Activated naive CD4-positive, alpha-beta T cell treated with anti-CD3 and anti-CD28 coated beads, Interleukin-2, amount 10 ng/mL, durations not matched to agents 7 days and 5 days (primary cell): ENCODE measurements at regions of chr6 and their contacts with region 1.

Region 1: DNA sequence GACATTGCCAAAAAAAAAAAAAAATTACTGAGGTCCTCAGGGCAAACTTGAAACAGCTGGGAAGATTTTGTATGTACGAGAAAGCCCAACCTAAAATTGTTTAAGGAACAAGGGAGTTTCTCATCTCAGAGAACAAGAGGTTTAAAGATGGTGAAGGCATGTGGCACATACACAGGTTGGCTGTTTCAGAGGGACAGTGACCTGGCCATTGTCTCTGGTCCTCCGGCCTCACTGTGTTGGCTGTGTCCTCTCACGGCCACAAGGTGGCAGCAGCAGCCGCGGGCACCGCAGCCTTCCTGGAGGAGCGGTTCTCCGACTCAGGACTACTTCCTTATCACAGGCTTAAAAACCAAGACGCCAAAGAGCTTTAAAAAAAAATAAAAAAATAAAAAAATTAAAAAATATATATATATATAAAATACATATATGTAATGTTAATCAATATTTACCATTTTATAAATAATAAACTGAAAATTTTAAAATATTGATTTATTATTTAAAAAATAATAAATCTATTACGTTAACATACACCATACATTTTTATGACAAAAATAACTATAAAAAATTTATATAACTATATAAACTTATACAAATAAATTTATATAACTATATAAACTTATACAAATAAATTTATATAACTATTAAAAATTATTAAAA is 52.8 kb downstream of the GTF2H5 start:
- DNase-seq: peak; percentile 81
- H3K4me3 Mint-ChIP-seq: no peak overlapping the region
- H3K27ac Mint-ChIP-seq: no peak overlapping the region
- H3K4me1 Mint-ChIP-seq: peaks cover 4% of the 10 kb centered on the region
- H3K27me3 Mint-ChIP-seq: peaks cover 35% of the 10 kb centered on the region

Region 2: DNA sequence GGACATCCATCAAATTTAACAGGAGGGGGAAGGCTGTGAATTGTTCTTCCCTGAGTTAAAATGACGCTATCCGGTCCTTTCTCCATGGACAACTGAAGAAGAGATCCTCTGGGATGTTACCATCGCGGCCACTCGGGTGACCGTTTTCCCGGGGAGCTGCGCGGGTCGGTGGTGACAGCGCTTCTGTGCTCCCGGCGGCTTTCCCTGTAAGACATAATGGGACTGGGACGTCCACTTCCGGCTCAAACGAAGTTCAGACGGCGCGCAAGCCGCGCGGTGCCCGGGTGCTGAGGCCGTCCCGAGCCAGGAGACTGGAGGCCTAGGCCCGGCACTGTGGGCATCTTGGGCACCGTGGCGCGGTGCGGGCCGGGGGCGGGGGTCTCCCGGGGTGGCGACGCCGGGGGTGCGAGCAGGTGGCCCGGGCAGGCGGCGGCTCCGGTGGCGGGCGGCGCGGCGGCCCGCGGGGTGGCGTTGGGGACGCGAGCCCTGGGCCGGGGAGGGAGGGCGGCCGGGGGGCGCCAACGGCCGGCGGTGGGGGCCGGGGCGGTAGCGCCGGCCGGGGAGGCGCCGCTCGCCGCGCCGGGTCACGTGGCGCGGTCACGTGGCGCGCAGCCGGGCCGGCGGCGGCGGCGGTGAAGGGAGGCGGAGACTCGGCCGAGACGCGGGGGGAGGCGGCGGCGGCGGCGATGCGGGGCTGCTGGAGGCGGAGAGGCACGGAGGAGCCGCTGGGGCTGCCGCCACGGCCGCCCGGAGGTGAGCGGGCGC is 10.8 kb after region 1 on chr6:
- CTCF ChIA-PET with region 1: interaction called, 10 read pairs
- DNase-seq: peak; percentile 82
- H3K4me3 Mint-ChIP-seq: peak overlapping the region; percentile 90
- H3K27ac Mint-ChIP-seq: peak overlapping the region; percentile 86
- H3K4me1 Mint-ChIP-seq: peaks cover 25% of the 10 kb centered on the region
- H3K27me3 Mint-ChIP-seq: peaks cover 13% of the 10 kb centered on the region

Region 3: DNA sequence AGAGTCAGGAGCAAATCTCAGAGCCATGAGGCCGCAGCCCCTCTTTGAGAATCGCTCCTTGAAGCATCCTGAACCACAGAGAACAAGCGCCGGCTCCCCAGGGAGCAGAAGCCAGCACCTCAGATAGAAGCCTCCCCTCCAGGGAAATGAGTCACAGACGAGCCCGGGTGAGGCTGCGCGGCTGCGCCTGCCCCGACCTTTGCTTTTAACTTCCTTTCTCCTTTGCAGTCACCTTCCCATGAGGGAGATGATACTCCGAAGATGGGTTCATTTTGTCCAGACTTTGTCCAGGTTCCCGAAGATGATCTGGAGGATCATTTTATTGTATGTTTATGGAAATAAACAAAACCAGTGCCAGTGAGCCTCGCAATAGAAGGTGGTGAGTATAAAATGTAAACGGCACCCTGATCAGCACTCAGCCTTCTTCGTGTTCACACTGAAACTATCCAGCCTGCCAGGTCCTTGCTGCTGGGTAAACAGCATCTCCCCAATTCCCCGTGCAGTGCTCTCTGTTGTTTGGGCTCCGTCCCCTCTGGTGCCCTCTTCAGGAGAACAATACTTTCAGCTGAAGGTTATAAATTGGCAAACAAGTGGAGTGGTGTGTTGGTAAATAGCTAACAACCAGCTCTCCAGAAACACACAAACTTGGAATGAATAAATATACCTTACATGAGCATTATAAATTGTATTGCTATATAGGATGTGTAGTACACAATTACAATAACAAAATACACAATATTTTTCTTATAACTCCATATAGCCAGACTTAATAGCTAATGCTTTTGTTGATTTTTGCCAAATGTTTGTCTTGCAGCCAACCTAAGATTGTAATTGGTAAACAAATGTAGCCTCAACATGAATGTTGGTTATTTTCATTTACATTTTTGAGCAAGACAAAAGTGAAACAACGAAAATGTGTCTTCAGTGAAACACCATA is 297.5 kb after region 1 on chr6:
- CTCF ChIA-PET with region 1: interaction called, 10 read pairs
- DNase-seq: peak; percentile 82
- H3K4me3 Mint-ChIP-seq: peak overlapping the region; percentile 77
- H3K27ac Mint-ChIP-seq: peak overlapping the region; percentile 80
- H3K4me1 Mint-ChIP-seq: peaks cover 53% of the 10 kb centered on the region
- H3K27me3 Mint-ChIP-seq: peaks cover 66% of the 10 kb centered on the region

Region 4: DNA sequence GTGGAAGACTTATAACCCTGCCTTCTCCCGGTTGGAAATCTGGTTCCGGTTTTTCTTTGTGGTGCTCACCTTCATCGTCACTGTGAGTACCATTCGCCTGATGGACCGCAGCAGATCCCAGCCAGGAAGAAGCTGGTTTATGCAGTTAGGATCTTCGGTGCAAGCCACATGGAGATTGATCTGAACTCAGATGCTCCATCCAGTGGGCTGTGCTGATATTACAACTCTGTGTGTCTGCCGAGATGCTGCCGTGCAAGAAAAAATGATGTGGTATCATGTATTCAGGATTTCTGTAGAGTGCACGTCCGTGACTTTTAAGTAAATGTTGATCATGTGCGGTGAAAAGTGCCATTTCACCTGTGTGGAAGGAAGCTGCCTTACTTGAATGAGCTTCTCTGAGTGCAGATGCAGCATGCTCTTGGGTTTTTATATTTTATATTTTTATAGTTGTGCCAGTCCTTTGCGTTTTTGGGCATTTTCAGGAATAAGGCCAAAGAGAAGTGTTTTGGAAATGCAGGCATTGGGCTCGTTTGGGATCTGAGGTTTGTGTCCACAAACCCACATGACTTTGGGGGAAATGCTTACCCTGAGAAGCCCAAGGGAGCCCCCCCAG is 384.5 kb after region 1 on chr6:
- CTCF ChIA-PET with region 1: interaction called, 29 read pairs
- DNase-seq: peak; percentile 71
- H3K4me3 Mint-ChIP-seq: no peak overlapping the region
- H3K27ac Mint-ChIP-seq: no peak overlapping the region
- H3K4me1 Mint-ChIP-seq: peaks cover 4% of the 10 kb centered on the region
- H3K27me3 Mint-ChIP-seq: no peaks in the 10 kb centered on the region